ENCODE measurements at regions of chr11 and their contacts with region 1.

Region 1: GRCh38 chr11:93648167-93648566 is 13.3 kb upstream of the CEP295 start:
- DNase-seq: peak in 1 of 35 experiments; percentile 21
- ATAC-seq: peak in 1 of 4 experiments; percentile 36
- H3K4me3 ChIP-seq: no peak overlapping the region
- H3K4me3 Mint-ChIP-seq: no peak overlapping the region
- H3K27ac ChIP-seq: no peak overlapping the region
- H3K27ac Mint-ChIP-seq: peak overlapping the region in 1 of 2 donors; percentile 32
- H3K4me1 ChIP-seq: peaks cover 0 to 8% of the 10 kb centered on the region in 2 experiments
- H3K4me1 Mint-ChIP-seq: peaks cover 9 to 12% (median 11%) of the 10 kb centered on the region in 3 donors
- H3K27me3 ChIP-seq: peaks cover 0 to 4% of the 10 kb centered on the region in 2 experiments
- H3K27me3 Mint-ChIP-seq: peaks cover 0 to 6% of the 10 kb centered on the region in 2 donors

Region 2: DNA sequence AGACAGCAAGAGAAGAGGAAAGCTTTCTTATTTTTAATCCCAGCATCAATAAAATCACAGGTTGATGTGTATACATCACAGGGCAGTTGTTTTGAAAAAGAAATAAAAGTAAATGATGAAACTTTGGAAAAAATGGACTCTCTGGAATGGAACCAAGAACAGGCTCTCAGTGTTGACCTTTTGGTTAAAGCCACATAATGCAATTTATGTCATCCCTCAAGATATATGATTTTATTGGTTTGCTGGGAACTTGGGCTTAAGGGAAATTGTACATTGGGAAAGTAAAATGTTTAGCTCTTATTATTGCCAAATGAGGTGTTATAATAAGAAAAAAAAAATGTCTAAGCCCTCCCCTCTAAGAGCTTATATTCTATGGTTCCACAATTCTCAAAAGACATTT is 818.5 kb before region 1 on chr11:
- CTCF ChIA-PET with region 1: interaction called in 1 of 2 experiments, 17 read pairs
- POLR2A ChIA-PET with region 1: no interaction called
- DNase-seq: no peak
- ATAC-seq: no peak
- H3K4me3 ChIP-seq: no peak overlapping the region
- H3K4me3 Mint-ChIP-seq: no peak overlapping the region
- H3K27ac ChIP-seq: no peak overlapping the region
- H3K27ac Mint-ChIP-seq: no peak overlapping the region
- H3K4me1 ChIP-seq: no peaks in the 10 kb centered on the region
- H3K4me1 Mint-ChIP-seq: no peaks in the 10 kb centered on the region
- H3K27me3 ChIP-seq: no peaks in the 10 kb centered on the region
- H3K27me3 Mint-ChIP-seq: peaks cover 3 to 6% of the 10 kb centered on the region in 2 donors

Region 3: GRCh38 chr11:93662177-93662575 is 14.0 kb after region 1 on chr11:
- CTCF ChIA-PET with region 1: interaction called, 4 to 10 read pairs
- POLR2A ChIA-PET with region 1: interaction called in 1 of 2 experiments, 6 read pairs
- DNase-seq: no peak
- ATAC-seq: no peak
- H3K4me3 ChIP-seq: peak overlapping the region; percentile 91 to 97
- H3K4me3 Mint-ChIP-seq: peak overlapping the region; percentile 75 to 87 (median 87)
- H3K27ac ChIP-seq: peak overlapping the region; percentile 96
- H3K27ac Mint-ChIP-seq: peak overlapping the region; percentile 83
- H3K4me1 ChIP-seq: peaks cover 2 to 17% of the 10 kb centered on the region in 2 experiments
- H3K4me1 Mint-ChIP-seq: peaks cover 25 to 35% (median 32%) of the 10 kb centered on the region in 3 donors
- H3K27me3 ChIP-seq: no peaks in the 10 kb centered on the region
- H3K27me3 Mint-ChIP-seq: no peaks in the 10 kb centered on the region

Region 4: DNA sequence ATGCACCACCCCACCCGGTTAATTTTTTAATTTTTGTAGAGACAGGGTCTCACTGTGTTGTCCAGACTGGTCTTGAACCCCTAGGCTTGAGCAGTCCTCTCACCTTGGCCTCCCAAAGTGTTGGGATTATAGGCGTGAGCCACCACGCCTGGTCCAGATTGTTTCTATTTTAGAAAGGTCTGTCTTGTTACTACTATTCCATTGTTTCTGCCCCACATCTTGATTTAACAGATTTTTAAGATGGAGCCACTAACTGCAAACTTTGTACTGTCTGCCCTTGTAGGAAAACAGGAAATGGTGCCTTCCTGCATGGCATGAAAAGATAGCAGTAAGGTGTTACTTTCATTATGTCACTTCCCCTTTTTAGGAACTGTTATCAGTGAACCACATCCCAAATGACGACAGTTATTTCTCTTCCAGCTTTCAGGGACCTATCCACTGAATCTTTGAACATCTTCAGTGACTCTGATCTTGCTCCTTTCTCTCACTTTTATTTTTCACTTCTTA is 69.9 kb after region 1 on chr11:
- CTCF ChIA-PET with region 1: no interaction called
- POLR2A ChIA-PET with region 1: no interaction called
- DNase-seq: peak in 2 of 35 experiments; percentile 11 to 51
- ATAC-seq: peak; percentile 45 to 65 (median 54)
- H3K4me3 ChIP-seq: no peak overlapping the region
- H3K4me3 Mint-ChIP-seq: peak overlapping the region in 2 of 3 donors; percentile 39 to 51
- H3K27ac ChIP-seq: peak overlapping the region; percentile 28
- H3K27ac Mint-ChIP-seq: peak overlapping the region; percentile 83 to 90
- H3K4me1 ChIP-seq: peaks cover 5 to 11% of the 10 kb centered on the region in 2 experiments
- H3K4me1 Mint-ChIP-seq: peaks cover 15 to 26% (median 22%) of the 10 kb centered on the region in 3 donors
- H3K27me3 ChIP-seq: no peaks in the 10 kb centered on the region
- H3K27me3 Mint-ChIP-seq: no peaks in the 10 kb centered on the region

Region 5: DNA sequence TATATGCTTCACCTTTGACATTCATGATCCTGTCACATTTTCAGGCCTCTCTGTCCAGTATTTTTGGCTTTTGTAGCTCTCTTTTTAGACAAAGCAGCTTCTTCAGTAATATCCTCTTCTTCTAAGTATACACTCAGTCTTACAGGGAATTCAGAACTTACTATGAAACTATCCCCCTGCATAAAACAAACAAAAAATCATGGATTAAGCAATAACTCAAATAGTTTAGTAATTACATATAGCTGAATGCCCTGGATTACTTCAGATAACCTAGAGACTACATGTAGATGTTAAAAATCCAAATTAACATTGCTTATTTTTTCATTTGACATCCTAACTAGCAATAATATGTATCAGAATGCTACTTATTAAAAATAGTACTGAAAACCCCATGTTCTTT is 88.0 kb after region 1 on chr11:
- CTCF ChIA-PET with region 1: no interaction called
- POLR2A ChIA-PET with region 1: interaction called in 1 of 2 experiments, 13 read pairs
- DNase-seq: no peak
- ATAC-seq: no peak
- H3K4me3 ChIP-seq: no peak overlapping the region
- H3K4me3 Mint-ChIP-seq: no peak overlapping the region
- H3K27ac ChIP-seq: peak overlapping the region; percentile 32
- H3K27ac Mint-ChIP-seq: peak overlapping the region; percentile 48 to 78
- H3K4me1 ChIP-seq: peaks cover 24 to 32% of the 10 kb centered on the region in 2 experiments
- H3K4me1 Mint-ChIP-seq: peaks cover 59 to 77% (median 75%) of the 10 kb centered on the region in 3 donors
- H3K27me3 ChIP-seq: no peaks in the 10 kb centered on the region
- H3K27me3 Mint-ChIP-seq: no peaks in the 10 kb centered on the region

Measured in T-cell (primary cell).